ENCODE measurements at regions of chr3 and their contacts with region 1.

Region 1: GRCh38 chr3:192444096-192444790 is 283.1 kb downstream of the FGF12 start:
- DNase-seq: peak; percentile 67 to 89
- H3K4me3 ChIP-seq: no peak overlapping the region
- H3K27ac ChIP-seq: no peak overlapping the region
- H3K4me1 ChIP-seq: no peaks in the 10 kb centered on the region
- H3K27me3 ChIP-seq: peaks cover 0 to 29% (median 14%) of the 10 kb centered on the region in 3 donors
- CTCF ChIP-seq: peak in 5 of 7 experiments; percentile 81 to 93 (median 92)
- EP300 ChIP-seq: no peak
- POLR2A ChIP-seq: no peak

Region 2: GRCh38 chr3:191412759-191413158 is 1031.5 kb before region 1 on chr3:
- intact Hi-C with region 1: loop called (anchors 10 kb)
- DNase-seq: peak in 1 of 2 donors; percentile 8
- H3K4me3 ChIP-seq: no peak overlapping the region
- H3K27ac ChIP-seq: no peak overlapping the region
- H3K4me1 ChIP-seq: no peaks in the 10 kb centered on the region
- H3K27me3 ChIP-seq: no peaks in the 10 kb centered on the region
- CTCF ChIP-seq: no peak
- EP300 ChIP-seq: no peak
- POLR2A ChIP-seq: no peak

Region 3: DNA sequence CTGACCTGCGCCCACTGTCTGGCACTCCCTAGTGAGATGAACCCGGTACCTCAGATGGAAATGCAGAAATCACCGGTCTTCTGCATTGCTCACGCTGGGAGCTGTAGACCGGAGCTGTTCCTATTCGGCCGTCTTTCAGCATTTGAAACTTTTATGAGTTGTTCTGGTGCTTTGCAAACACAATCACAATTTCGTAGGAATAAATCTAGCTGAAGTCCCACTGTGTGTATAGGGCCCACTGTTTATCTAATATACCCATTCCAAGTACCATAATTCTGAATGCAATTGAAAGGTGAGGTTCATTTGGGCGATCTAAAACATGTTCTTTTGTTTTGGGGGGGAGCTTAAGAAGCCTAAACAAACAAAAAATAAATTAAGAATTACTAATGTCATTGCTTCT is 289.0 kb before region 1 on chr3:
- intact Hi-C with region 1: no loop called
- DNase-seq: no peak
- H3K4me3 ChIP-seq: no peak overlapping the region
- H3K27ac ChIP-seq: no peak overlapping the region
- H3K4me1 ChIP-seq: no peaks in the 10 kb centered on the region
- H3K27me3 ChIP-seq: no peaks in the 10 kb centered on the region
- CTCF ChIP-seq: no peak
- EP300 ChIP-seq: no peak
- POLR2A ChIP-seq: no peak

Region 4: DNA sequence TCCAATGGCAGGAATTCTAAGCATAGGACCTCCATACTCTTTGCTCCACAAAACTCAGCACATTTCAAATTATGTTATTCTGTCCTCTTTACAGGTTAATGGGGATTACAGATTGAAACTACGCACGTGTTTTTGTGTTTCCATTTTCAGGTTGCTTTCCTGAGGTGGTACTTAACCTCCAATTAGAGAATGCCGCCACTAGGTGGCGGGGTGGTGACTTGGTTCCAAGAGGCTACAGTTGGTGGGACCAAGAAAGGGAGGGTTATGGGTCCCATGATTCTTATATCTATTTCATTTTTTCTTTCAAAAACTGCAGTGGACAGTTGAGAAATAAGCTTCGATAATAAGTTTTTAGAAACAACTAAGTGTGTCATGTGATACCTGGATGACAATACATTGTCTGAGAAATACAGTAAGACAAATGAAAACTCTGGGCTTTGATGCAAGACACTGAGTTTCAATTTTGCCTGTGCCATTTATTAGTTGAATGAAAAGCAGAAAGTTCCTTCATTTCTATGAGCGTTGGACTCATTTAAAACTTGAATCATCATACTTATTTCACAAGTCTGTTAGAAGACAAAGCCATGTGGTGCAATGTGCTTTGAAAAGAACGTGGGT is 255.9 kb before region 1 on chr3:
- intact Hi-C with region 1: loop called (anchors 10 kb)
- DNase-seq: peak; percentile 63 to 68
- H3K4me3 ChIP-seq: no peak overlapping the region
- H3K27ac ChIP-seq: no peak overlapping the region
- H3K4me1 ChIP-seq: no peaks in the 10 kb centered on the region
- H3K27me3 ChIP-seq: no peaks in the 10 kb centered on the region
- CTCF ChIP-seq: peak in 4 of 7 experiments; percentile 15 to 65 (median 50)
- EP300 ChIP-seq: no peak
- POLR2A ChIP-seq: no peak

Region 5: DNA sequence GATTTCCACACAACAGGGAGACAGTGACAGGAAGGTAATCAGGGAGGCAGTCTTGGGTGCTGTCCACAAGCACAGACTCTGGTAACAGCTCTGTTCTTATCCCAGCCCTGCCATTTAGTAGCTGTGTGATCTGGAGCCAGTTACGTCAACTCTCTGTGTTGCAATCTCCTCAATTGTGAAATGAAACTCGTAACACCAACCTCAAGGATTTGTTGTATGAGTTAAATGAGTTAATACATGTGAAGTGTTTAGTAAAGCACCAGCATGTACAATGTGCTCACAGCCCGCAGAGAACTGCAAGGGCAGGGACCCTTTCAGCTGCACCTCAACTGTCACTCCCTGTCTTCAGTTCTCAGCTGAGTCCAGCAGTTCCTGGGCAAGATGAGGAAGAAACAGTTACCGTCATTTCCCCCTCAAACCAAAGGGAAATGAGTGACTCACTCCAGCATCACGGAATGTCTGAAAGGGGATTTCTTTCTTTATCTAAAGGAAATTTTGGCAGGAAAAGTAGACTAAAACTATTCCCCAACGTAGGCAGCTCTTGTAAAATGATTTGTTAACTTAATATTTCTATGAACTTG is 513.3 kb after region 1 on chr3:
- intact Hi-C with region 1: no loop called
- DNase-seq: peak in 1 of 2 donors; percentile 64
- H3K4me3 ChIP-seq: no peak overlapping the region
- H3K27ac ChIP-seq: peak overlapping the region in 4 of 5 donors; percentile 23 to 70 (median 36)
- H3K4me1 ChIP-seq: no peaks in the 10 kb centered on the region
- H3K27me3 ChIP-seq: no peaks in the 10 kb centered on the region
- CTCF ChIP-seq: no peak
- EP300 ChIP-seq: no peak
- POLR2A ChIP-seq: no peak

Measured in stomach (tissue), 19 donors.